Activated CD8-positive, alpha-beta T cell treated with anti-CD3 and anti-CD28 coated beads for 36 hours (primary cell): ENCODE measurements at regions of chr9 and their contacts with region 1.

Region 1: DNA sequence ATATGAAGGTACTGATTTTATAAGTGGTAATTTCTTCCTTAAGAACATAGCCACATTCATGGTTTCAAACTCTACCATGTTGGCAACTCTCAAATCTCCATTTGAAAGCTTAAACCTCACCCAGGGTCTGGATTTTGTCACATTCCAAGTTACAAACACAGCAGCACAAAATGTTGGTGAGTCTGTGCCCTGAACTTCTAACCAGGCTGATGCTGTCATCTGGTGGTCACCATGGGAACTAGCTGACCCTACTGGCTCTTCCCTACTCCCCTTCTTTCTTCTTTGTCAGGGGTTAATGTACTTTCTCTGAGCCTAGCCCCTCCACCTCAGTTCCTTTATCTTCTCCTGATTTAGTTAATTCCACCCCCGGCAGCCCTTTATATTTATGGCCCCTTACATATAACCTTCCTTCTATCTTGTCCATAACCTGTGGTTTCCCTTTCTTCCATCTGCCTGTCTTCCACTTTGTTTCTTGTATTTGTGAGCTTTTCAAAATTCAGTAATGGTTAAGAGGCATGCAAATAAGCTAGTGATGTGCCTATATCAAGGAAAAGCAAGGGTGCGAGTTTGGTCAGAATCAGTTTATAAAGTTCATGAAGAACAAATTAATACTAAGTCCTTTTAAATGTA is 35.9 kb downstream of the TGFBR1 start:
- DNase-seq: peak; percentile 52
- ATAC-seq: peak; percentile 87
- H3K4me3 Mint-ChIP-seq: no peak overlapping the region
- H3K27ac Mint-ChIP-seq: peak overlapping the region; percentile 14
- H3K4me1 Mint-ChIP-seq: peaks cover 37% of the 10 kb centered on the region
- H3K27me3 Mint-ChIP-seq: no peaks in the 10 kb centered on the region
- CTCF ChIP-seq: peak; percentile 75

Region 2: GRCh38 chr9:98974994-98975712 is 165.6 kb before region 1 on chr9:
- CTCF ChIA-PET with region 1: interaction called, 83 read pairs
- POLR2A ChIA-PET with region 1: interaction called, 3 read pairs
- intact Hi-C with region 1: loop called (anchors 5 kb)
- DNase-seq: peak; percentile 86
- ATAC-seq: peak; percentile 99
- H3K4me3 Mint-ChIP-seq: no peak overlapping the region
- H3K27ac Mint-ChIP-seq: no peak overlapping the region
- H3K4me1 Mint-ChIP-seq: peaks cover 9% of the 10 kb centered on the region
- H3K27me3 Mint-ChIP-seq: no peaks in the 10 kb centered on the region
- CTCF ChIP-seq: peak; percentile 93

Region 3: GRCh38 chr9:99012942-99013512 is 127.8 kb before region 1 on chr9:
- CTCF ChIA-PET with region 1: interaction called, 46 read pairs
- POLR2A ChIA-PET with region 1: no interaction called
- intact Hi-C with region 1: no loop called
- DNase-seq: peak; percentile 36
- ATAC-seq: peak; percentile 79
- H3K4me3 Mint-ChIP-seq: no peak overlapping the region
- H3K27ac Mint-ChIP-seq: peak overlapping the region; percentile 93
- H3K4me1 Mint-ChIP-seq: peaks cover 22% of the 10 kb centered on the region
- H3K27me3 Mint-ChIP-seq: no peaks in the 10 kb centered on the region
- CTCF ChIP-seq: peak; percentile 45

Region 4: GRCh38 chr9:99050292-99050911 is 90.4 kb before region 1 on chr9:
- CTCF ChIA-PET with region 1: interaction called, 12 read pairs
- POLR2A ChIA-PET with region 1: interaction called, 3 read pairs
- intact Hi-C with region 1: no loop called
- DNase-seq: no peak
- ATAC-seq: no peak
- H3K4me3 Mint-ChIP-seq: no peak overlapping the region
- H3K27ac Mint-ChIP-seq: no peak overlapping the region
- H3K4me1 Mint-ChIP-seq: peaks cover 28% of the 10 kb centered on the region
- H3K27me3 Mint-ChIP-seq: peaks cover 1% of the 10 kb centered on the region
- CTCF ChIP-seq: no peak

Region 5: DNA sequence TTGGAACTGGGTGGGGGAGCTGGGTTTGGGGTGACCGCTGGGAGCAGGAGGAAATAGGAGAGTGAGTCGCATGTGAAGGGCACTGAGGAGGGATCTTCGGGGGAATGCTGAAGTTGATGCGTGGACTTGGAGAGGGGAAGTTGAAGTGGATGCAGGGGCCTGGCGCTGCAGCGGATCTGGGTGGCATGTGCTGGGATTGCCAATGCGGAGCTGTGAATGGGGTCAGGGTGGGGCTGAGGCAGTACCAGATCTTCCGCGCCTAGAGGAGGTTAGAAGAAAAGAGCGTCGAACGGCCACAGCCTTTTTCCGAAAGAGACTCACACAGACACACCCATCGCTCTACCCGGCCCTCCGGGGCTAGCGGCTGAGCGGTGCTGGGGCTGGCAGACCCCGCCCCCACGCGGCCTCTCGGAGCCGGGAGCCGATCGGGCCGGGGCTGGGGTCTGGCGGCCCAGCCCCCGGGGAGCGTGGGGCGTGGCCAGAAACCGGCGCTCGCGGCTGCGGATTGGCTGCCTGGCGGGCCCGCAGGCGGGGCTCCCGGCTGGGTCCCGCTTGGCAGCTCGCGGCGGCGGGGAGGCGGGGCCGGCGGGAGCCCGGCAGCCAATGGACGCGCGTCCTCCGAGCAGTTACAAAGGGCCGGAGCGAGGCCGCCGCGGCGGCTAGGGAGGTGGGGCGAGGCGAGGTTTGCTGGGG is 36.2 kb before region 1 on chr9 and contains the start of gene TGFBR1:
- CTCF ChIA-PET with region 1: interaction called, 23 read pairs
- POLR2A ChIA-PET with region 1: interaction called, 3 read pairs
- intact Hi-C with region 1: loop called (anchors 5 kb)
- DNase-seq: peak; percentile 92
- ATAC-seq: peak; percentile 87
- H3K4me3 Mint-ChIP-seq: peak within 1 kb of the TSS; percentile 78
- H3K27ac Mint-ChIP-seq: peak within 1 kb of the TSS; percentile 86
- H3K4me1 Mint-ChIP-seq: peaks cover 47% of the 10 kb centered on the region
- H3K27me3 Mint-ChIP-seq: no peaks in the 10 kb centered on the region
- CTCF ChIP-seq: no peak
- total RNA-seq, gene TGFBR1: 34.3 to 36.5 TPM

Region 6: DNA sequence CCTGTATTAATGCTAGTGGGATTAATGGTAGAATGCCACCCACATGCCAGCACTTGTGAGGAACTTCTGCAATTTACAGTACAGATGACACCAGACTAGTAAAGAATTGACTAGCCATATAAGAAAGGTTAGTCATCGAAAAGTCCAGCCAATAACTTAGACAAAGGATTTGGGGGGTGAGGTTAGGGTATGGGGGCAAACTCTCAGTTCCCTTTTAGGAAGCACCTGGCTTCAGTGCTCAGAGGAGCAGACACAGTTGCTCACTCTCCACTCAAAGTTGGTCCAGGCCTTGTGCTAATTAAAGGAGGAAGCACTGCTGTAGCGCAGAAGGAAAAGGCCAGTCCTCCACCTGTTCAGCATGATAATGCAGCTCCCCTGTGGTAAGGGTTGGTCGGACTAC is 10.7 kb before region 1 on chr9:
- CTCF ChIA-PET with region 1: interaction called, 32 read pairs
- POLR2A ChIA-PET with region 1: interaction called, 3 read pairs
- intact Hi-C with region 1: no loop called
- DNase-seq: peak; percentile 40
- ATAC-seq: peak; percentile 35
- H3K4me3 Mint-ChIP-seq: no peak overlapping the region
- H3K27ac Mint-ChIP-seq: peak overlapping the region; percentile 81
- H3K4me1 Mint-ChIP-seq: peaks cover 76% of the 10 kb centered on the region
- H3K27me3 Mint-ChIP-seq: no peaks in the 10 kb centered on the region
- CTCF ChIP-seq: no peak